ENCODE measurements at regions of chr1 and their contacts with region 1.

Region 1: GRCh38 chr1:235783148-235783776 is 83.4 kb downstream of the LYST start:
- DNase-seq: no peak
- ATAC-seq: peak; percentile 53

Region 2: GRCh38 chr1:235286667-235287066 is 496.6 kb before region 1 on chr1:
- intact Hi-C with region 1: no loop called
- DNase-seq: no peak
- ATAC-seq: no peak

Region 3: DNA sequence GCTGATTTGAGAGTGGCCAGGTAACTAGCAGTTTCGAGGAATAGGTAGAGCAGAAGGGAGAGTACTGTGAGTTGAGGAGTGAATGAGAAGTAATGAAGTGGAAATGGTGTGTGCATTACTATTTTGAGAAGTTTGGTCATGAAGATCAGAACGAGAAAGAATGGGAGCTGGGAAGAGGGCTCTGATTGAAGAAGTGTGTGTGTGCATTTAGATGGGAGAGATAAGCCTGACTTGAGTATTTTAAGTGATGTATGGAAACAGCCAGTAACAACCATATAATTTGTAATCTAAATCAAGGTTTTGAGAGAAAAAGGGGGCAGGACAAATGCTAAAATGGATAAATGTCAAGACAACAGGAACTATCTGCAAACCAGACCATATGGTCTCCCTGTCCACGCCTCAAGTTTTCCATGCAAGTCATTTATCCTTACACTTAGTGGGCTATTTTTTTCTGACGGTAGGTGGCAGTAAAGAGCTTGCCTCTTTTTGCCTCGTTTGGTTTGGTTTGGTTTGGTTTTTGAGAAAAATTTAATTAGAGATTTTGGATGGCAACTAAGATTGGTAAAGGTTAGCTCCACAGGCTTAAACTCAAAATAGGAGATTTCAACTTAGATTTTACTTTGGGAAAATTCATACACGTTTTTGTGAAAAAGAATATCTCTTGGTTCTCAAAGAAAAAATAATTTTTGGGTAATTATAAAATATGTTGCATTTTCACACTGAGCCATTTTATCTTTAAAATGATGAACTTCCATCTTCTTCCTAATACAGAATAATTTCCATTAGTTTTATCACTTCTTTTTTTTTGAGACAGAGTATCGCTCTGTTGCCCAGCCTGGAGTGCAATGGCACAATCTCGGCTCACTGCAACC is 269.5 kb before region 1 on chr1:
- intact Hi-C with region 1: loop called (anchors 10 kb)
- DNase-seq: no peak
- ATAC-seq: peak; percentile 53

Region 4: DNA sequence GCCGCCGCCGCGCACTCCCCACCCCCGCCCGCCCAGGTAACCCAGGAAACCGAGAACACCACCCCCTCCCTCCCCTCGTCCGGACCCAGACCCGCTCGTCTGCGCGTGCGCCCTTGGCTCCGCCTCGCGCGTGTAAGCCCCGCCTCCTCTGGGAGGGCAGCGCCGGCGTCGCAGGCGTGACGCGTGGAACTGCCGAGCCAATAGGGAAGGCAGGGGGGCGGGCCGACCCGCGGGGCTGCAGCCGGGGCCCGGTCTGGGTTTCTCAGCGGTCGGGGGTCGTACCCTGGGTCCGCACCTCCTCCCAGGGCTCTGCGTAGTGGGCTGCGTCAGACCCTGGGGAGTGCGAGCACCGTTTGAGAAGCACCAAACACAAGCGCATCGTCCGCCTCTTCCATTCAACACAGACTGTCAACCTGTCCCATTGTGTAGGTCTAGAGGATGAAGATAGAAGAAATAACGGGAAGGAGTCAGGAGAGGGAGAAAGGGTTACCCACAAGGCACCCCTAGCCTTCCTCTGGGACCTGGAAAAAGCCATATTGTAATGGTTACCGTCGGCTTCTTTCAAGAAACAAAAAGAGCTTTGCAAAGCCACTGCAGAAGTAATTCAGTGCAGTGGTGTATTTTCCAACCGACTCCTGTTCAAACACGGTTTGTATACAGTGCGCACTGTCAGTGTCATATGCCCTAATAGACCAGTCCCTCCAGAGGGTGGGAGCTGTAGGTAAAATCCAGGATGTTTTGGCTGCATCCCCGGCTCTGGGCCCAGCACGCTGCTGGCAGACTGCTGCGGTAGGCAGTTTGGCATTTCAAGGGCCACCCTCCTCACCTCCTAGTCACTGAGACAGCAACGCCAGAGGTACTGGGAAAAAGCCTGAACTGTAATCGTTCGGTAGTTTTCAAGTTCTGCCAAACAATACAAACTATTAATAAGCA is 83.9 kb after region 1 on chr1:
- intact Hi-C with region 1: no loop called
- DNase-seq: peak; percentile 98
- ATAC-seq: peak; percentile 99

Measured in sciatic nerve (tissue), 2 donors.